B cell (primary cell): ENCODE measurements at regions of chr1 and their contacts with region 1.

Region 1: DNA sequence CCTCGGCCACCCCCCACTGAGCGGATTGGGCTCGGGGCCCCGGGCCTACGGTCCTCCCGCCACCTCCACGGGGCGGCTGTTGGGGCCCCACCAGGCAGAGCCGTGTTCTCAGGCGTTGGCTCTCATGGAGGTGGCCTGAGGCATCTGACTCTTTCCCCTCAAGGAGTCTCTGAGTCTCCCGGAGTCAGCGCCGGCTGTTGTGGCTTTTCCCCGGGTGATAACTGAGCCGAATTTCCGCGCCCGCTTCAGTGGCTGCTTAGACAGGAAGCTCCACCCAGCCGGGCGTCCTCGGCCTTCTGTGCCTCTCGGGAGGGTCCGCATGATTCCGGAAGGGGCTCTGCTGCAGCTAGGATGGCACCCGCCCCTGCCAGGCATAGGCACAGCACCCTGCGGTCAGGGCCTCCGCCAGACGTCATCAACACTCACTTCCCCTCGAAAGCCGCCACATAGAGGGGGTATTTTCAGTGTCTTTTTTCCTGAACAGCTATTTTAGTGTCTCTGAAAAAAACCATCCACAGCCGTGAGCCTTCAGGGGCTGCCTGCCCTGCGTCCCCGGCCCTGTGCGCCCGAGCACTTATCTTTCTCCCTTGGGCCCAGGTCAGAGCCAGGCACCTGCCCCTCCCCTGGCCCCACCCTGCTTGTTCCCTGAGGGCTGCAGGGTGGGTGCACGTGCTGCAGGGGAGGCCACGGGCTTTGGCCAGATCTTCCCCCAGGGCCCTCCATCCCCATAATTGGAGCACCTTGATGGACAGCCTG is 72.9 kb downstream of the SKI start:
- DNase-seq: peak; percentile 99
- ATAC-seq: peak; percentile 80
- H3K4me3 ChIP-seq: peak overlapping the region in 4 of 5 experiments; percentile 65 to 78 (median 70)
- H3K4me3 Mint-ChIP-seq: peak overlapping the region; percentile 93
- H3K27ac ChIP-seq: peak overlapping the region; percentile 99
- H3K27ac Mint-ChIP-seq: peak overlapping the region; percentile 99
- H3K4me1 ChIP-seq: peaks cover 40 to 56% of the 10 kb centered on the region in 2 donors
- H3K4me1 Mint-ChIP-seq: peaks cover 55% of the 10 kb centered on the region
- H3K27me3 ChIP-seq: no peaks in the 10 kb centered on the region
- H3K27me3 Mint-ChIP-seq: no peaks in the 10 kb centered on the region
- CTCF ChIP-seq: no peak

Region 2: GRCh38 chr1:2227346-2228153 is 73.5 kb before region 1 on chr1:
- CTCF ChIA-PET with region 1: interaction called, 4 read pairs
- POLR2A ChIA-PET with region 1: interaction called, 30 read pairs
- intact Hi-C with region 1: loop called (anchors 1 kb)
- DNase-seq: peak; percentile 98
- ATAC-seq: peak; percentile 91
- H3K4me3 ChIP-seq: peak overlapping the region in 4 of 5 experiments; percentile 50 to 65 (median 60)
- H3K4me3 Mint-ChIP-seq: peak overlapping the region; percentile 80
- H3K27ac ChIP-seq: peak overlapping the region; percentile 57 to 83
- H3K27ac Mint-ChIP-seq: peak overlapping the region; percentile 83
- H3K4me1 ChIP-seq: peaks cover 35 to 43% of the 10 kb centered on the region in 2 donors
- H3K4me1 Mint-ChIP-seq: peaks cover 37% of the 10 kb centered on the region
- H3K27me3 ChIP-seq: no peaks in the 10 kb centered on the region
- H3K27me3 Mint-ChIP-seq: no peaks in the 10 kb centered on the region
- CTCF ChIP-seq: no peak

Region 3: GRCh38 chr1:2255420-2256369 is 45.3 kb before region 1 on chr1:
- CTCF ChIA-PET with region 1: interaction called, 4 read pairs
- POLR2A ChIA-PET with region 1: interaction called, 19 read pairs
- intact Hi-C with region 1: loop called (anchors 1 kb)
- DNase-seq: peak; percentile 96
- ATAC-seq: peak; percentile 54
- H3K4me3 ChIP-seq: no peak overlapping the region
- H3K4me3 Mint-ChIP-seq: no peak overlapping the region
- H3K27ac ChIP-seq: peak overlapping the region; percentile 81 to 96
- H3K27ac Mint-ChIP-seq: no peak overlapping the region
- H3K4me1 ChIP-seq: peaks cover 56 to 82% of the 10 kb centered on the region in 2 donors
- H3K4me1 Mint-ChIP-seq: peaks cover 51% of the 10 kb centered on the region
- H3K27me3 ChIP-seq: no peaks in the 10 kb centered on the region
- H3K27me3 Mint-ChIP-seq: no peaks in the 10 kb centered on the region
- CTCF ChIP-seq: no peak

Region 4: GRCh38 chr1:2314803-2315673 is 14.0 kb after region 1 on chr1:
- CTCF ChIA-PET with region 1: interaction called, 27 read pairs
- POLR2A ChIA-PET with region 1: interaction called, 25 read pairs
- intact Hi-C with region 1: loop called (anchors 1 kb)
- DNase-seq: peak; percentile 81
- ATAC-seq: peak; percentile 59
- H3K4me3 ChIP-seq: peak overlapping the region in 4 of 5 experiments; percentile 51 to 71 (median 59)
- H3K4me3 Mint-ChIP-seq: peak overlapping the region; percentile 69
- H3K27ac ChIP-seq: peak overlapping the region; percentile 84 to 91
- H3K27ac Mint-ChIP-seq: peak overlapping the region; percentile 77
- H3K4me1 ChIP-seq: peaks cover 44 to 53% of the 10 kb centered on the region in 2 donors
- H3K4me1 Mint-ChIP-seq: peaks cover 35% of the 10 kb centered on the region
- H3K27me3 ChIP-seq: no peaks in the 10 kb centered on the region
- H3K27me3 Mint-ChIP-seq: no peaks in the 10 kb centered on the region
- CTCF ChIP-seq: peak; percentile 95

Region 5: DNA sequence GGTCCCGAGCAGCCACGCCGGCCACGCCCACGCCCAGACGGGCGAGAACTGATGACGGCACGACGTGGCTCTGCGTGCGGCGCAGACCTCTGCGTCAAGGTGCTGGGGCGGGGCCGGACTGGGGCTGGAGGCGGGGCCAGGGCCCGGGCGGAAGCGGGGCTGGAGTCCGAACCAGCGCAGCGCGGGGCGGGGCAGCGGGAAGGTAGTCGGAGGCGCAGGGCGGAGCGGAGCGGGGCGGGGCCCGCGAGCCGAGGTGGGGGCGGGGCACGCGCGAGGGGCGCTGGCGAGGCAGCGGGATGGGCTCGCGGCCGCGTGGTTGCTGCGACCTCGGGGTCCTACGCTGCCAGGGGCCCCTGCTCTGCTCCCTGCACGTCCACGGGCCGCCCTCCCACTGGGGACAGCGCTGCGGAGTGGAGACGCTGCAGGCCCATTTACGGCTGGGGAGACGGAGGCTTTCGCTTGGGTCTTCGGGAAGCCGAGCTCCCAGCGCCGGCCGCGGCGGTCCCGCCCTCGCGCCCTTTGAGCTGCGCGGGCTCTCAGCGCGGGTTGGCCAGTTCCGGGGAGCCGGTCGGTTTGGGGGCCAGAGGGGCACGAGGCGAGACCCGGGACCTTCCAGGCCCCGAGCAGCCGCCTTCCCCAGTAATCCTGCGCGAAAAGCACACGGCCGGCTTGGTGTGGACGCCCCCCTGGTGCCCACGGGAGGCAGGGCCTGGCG is 111.6 kb after region 1 on chr1 and contains the start of gene PEX10:
- CTCF ChIA-PET with region 1: no interaction called
- POLR2A ChIA-PET with region 1: no interaction called
- intact Hi-C with region 1: loop called (anchors 1 kb)
- DNase-seq: peak; percentile 98
- ATAC-seq: peak; percentile 94
- H3K4me3 ChIP-seq: peak within 1 kb of the TSS; percentile 19 to 78 (median 69)
- H3K4me3 Mint-ChIP-seq: peak within 1 kb of the TSS; percentile 89
- H3K27ac ChIP-seq: peak within 1 kb of the TSS; percentile 52 to 90
- H3K27ac Mint-ChIP-seq: peak within 1 kb of the TSS; percentile 92
- H3K4me1 ChIP-seq: peaks cover 45 to 51% of the 10 kb centered on the region in 2 donors
- H3K4me1 Mint-ChIP-seq: peaks cover 43% of the 10 kb centered on the region
- H3K27me3 ChIP-seq: no peaks in the 10 kb centered on the region
- H3K27me3 Mint-ChIP-seq: no peaks in the 10 kb centered on the region
- CTCF ChIP-seq: no peak
- total RNA-seq, gene PEX10: 16.5 and 18.4 TPM in 2 replicates